PC-9 (cell line): ENCODE measurements at regions of chr1 and their contacts with region 1.

Region 1: DNA sequence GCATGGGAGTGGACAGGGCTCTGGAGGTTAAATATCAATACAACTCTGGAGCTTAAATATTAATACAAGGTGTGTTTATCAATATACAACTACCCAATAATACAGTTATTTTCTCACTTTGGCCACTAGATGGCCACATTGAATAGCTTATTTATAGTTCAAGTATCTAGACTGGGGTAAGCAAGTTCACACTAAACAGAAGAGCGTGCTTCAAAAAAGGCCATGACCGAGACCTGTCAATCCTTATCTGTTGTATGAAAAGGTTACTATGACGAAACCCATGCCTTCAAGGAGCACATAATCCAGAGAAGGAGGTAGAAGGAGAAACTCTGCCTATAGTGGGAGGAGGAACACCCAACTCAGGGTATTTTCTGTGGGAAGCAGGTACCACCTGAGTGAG is 29.1 kb downstream of the CHML start:
- DNase-seq: peak; percentile 10 to 84
- H3K4me3 ChIP-seq: no peak overlapping the region
- H3K27ac ChIP-seq: peak overlapping the region; percentile 77; the same call in 1 of the 2 replicates
- H3K4me1 ChIP-seq: peaks cover 55% of the 10 kb centered on the region
- H3K27me3 ChIP-seq: no peaks in the 10 kb centered on the region
- CTCF ChIP-seq: peak; percentile 92

Region 2: DNA sequence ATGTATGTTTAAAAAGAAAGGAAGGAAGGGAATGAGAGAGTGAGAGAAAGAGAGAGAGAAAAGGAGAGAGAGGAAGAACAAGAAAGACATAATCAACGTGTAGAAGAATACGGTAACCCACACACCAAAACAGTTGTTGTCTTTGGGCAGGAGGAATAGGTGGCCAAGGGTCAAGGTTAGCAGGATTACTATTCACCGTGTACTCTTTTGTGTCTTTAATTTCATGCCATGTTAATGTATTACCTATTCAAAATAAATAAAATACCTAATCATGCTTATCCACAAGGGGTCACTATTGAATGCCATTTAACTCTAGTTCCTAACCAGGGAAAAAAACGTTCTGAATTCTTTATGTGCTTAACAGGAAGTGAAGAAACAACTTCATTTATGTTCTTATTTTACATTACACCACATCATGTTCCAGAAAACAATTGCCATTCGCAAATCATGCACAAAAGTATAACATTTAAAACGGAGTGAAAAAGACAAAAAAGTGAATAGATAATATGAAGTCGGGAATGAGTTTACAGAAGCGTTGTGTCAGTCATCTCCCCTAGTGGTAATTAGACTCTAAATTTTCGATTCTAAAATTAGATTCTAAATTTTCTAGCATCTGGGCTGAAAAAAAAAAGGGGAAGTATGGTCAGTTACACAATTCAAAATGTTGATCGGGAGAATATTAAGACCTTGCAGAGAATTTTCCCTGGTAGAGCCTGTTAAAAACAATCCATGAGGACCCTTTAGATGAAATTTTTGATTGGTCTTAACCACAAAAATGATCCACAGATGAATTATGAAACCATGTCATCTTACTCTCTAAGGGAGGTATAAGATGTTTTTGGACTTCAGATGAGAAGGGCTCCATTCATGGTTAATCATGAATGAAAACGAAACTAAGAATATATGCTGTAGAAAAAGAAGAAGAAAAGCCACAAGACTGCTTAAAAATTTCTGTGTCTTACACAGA is 79.6 kb before region 1 on chr1:
- CTCF ChIA-PET with region 1: interaction called, 4 read pairs
- POLR2A ChIA-PET with region 1: interaction called, 14 read pairs
- intact Hi-C with region 1: loop called (anchors 1 kb)
- DNase-seq: peak in 1 of 2 experiments; percentile 76
- H3K4me3 ChIP-seq: peak overlapping the region; percentile 44; the same call in 1 of the 2 replicates
- H3K27ac ChIP-seq: no peak overlapping the region
- H3K4me1 ChIP-seq: peaks cover 28% of the 10 kb centered on the region
- H3K27me3 ChIP-seq: no peaks in the 10 kb centered on the region
- CTCF ChIP-seq: peak; percentile 82

Region 3: GRCh38 chr1:241640029-241640818 is 29.2 kb after region 1 on chr1 and contains the starts of genes CHML and OPN3:
- CTCF ChIA-PET with region 1: no interaction called
- POLR2A ChIA-PET with region 1: interaction called, 23 read pairs
- intact Hi-C with region 1: no loop called
- DNase-seq: peak; percentile 70 to 93
- H3K4me3 ChIP-seq: peak within 1 kb of the TSS; percentile 78
- H3K27ac ChIP-seq: peak within 1 kb of the TSS; percentile 86
- H3K4me1 ChIP-seq: peaks cover 46% of the 10 kb centered on the region
- H3K27me3 ChIP-seq: no peaks in the 10 kb centered on the region
- CTCF ChIP-seq: no peak
- total RNA-seq, gene CHML: 34.6 and 47.8 TPM in 2 replicates
- total RNA-seq, gene OPN3: 53.2 and 62.7 TPM in 2 replicates

Region 4: GRCh38 chr1:241895013-241895412 is 283.9 kb after region 1 on chr1:
- CTCF ChIA-PET with region 1: interaction called, 8 read pairs
- POLR2A ChIA-PET with region 1: no interaction called
- intact Hi-C with region 1: loop called (anchors 5 kb)
- DNase-seq: peak in 1 of 2 experiments; percentile 92
- H3K4me3 ChIP-seq: no peak overlapping the region
- H3K27ac ChIP-seq: peak overlapping the region; percentile 29
- H3K4me1 ChIP-seq: peaks cover 14% of the 10 kb centered on the region; the same call in 1 of the 2 replicates
- H3K27me3 ChIP-seq: no peaks in the 10 kb centered on the region
- CTCF ChIP-seq: no peak

Region 5: DNA sequence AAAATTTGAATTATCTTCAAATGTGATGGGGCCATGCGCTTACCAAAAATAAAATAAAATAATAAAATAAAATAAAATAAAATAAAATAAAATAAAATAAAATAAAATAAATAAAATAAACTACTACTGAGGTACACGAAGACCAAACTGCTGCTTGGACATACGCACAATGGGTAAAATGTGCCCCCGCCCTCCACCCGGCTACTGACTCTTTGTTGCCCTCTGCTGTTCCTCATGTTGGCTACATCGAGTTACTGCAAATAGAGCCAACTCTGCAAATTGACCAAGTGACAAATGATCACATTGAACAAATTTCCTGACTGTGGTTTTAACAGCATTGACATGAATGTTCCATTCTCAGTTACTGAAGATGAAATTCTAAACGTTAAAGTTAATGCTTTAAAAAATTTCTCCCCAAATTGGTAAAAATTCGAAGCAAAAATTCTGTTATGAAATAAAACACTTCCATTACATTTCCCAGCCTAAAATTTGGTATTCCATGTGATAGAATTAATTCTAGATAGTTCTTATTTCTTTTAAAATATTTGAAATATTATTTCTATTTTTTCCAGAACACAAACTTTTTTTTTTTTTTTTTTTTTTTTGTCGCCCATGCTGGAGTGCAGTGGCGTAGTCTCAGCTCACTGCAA is 406.6 kb after region 1 on chr1:
- CTCF ChIA-PET with region 1: interaction called, 5 read pairs
- POLR2A ChIA-PET with region 1: no interaction called
- intact Hi-C with region 1: loop called (anchors 2 kb)
- DNase-seq: peak in 1 of 2 experiments; percentile 50
- H3K4me3 ChIP-seq: no peak overlapping the region
- H3K27ac ChIP-seq: no peak overlapping the region
- H3K4me1 ChIP-seq: no peaks in the 10 kb centered on the region
- H3K27me3 ChIP-seq: no peaks in the 10 kb centered on the region
- CTCF ChIP-seq: peak; percentile 62